MCF 10A (cell line): ENCODE measurements at regions of chr22 and their contacts with region 1.

Region 1: DNA sequence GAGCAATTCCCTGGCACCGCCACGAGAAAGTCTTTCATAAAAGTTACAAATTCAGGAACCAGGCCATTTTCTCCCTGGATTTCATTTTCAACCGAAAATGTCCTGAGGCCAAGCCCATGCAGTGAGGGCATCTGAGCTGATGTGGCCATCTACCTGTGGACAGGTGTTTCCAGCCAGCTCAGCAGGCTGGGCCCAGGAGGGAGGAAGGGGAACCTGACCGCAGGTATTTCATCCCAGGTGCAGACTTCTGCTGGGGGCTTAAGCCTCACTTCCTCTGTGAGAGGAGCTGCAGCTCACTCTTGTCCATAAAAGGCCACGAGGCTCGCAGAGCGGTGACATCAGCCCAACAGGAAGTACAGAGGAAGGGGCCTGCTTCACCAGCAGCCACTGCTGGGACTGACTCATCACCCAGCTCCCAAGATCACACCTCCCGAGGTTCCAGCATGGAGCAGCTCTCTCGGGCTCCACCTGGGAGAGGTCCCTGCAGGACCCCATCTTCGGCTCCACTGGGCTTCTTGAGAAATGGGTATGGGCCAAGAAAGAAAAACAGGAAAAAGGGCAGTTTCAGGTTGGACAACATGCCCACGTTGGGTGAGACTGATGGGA is 56.4 kb downstream of the MYH9 start:
- DNase-seq: peak; percentile 97
- H3K4me3 Mint-ChIP-seq: peak overlapping the region; percentile 64
- H3K27ac Mint-ChIP-seq: peak overlapping the region; percentile 98
- H3K4me1 Mint-ChIP-seq: peaks cover 73% of the 10 kb centered on the region
- H3K27me3 Mint-ChIP-seq: no peaks in the 10 kb centered on the region
- CTCF ChIP-seq: no peak

Region 2: GRCh38 chr22:36352803-36353507 is 21.5 kb after region 1 on chr22:
- CTCF ChIA-PET with region 1: interaction called, 4 read pairs
- POLR2A ChIA-PET with region 1: interaction called, 39 read pairs
- intact Hi-C with region 1: loop called (anchors 2 kb)
- DNase-seq: peak; percentile 83
- H3K4me3 Mint-ChIP-seq: peak overlapping the region; percentile 55
- H3K27ac Mint-ChIP-seq: peak overlapping the region; percentile 83
- H3K4me1 Mint-ChIP-seq: peaks cover 64% of the 10 kb centered on the region
- H3K27me3 Mint-ChIP-seq: no peaks in the 10 kb centered on the region
- CTCF ChIP-seq: no peak

Region 3: GRCh38 chr22:36369922-36370791 is 38.7 kb after region 1 on chr22:
- CTCF ChIA-PET with region 1: interaction called, 5 read pairs
- POLR2A ChIA-PET with region 1: interaction called, 87 read pairs
- intact Hi-C with region 1: loop called (anchors 1 kb)
- DNase-seq: peak; percentile 82
- H3K4me3 Mint-ChIP-seq: peak overlapping the region; percentile 54
- H3K27ac Mint-ChIP-seq: peak overlapping the region; percentile 79
- H3K4me1 Mint-ChIP-seq: peaks cover 64% of the 10 kb centered on the region
- H3K27me3 Mint-ChIP-seq: no peaks in the 10 kb centered on the region
- CTCF ChIP-seq: no peak

Region 4: DNA sequence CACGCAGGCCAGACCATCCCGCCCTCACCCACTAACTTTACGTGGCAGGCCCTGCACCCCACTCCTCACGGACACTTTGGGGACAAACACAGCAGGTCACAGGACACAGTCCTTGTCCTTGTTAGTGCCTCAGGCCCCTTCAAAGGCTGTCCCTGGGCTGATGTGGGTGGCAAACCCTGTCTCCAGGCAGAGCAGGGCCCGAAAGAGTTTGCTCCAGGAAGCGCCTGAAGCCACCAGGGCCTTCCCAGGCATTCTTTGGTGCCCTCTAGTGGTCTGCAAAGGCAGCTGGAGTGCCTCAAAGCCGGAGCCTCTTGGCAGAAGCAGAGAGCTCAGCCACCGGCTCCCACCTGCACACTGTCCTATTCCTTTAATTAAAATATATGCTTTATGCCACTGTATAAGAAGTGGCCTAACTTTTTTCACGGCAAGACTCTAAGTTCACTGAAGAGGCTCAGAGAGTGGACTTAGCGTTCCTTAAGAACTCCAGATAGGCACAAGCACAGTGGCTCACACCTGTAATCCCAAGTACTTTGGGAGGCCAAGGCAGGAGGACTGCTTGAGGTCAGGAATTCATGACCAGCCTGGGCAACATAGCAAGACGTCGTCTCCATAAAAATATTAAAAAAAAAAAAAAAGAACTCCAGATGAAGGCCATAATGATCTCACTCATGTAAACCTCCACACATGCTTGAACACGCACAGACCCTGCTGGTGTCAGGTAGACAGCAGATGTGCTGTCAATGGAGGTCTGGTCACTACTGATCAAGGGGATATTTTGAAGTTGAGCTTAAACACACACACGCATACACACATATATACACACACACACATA is 139.0 kb after region 1 on chr22:
- CTCF ChIA-PET with region 1: interaction called, 19 read pairs
- POLR2A ChIA-PET with region 1: interaction called, 56 read pairs
- intact Hi-C with region 1: no loop called
- DNase-seq: peak; percentile 85
- H3K4me3 Mint-ChIP-seq: no peak overlapping the region
- H3K27ac Mint-ChIP-seq: peak overlapping the region; percentile 51
- H3K4me1 Mint-ChIP-seq: peaks cover 48% of the 10 kb centered on the region
- H3K27me3 Mint-ChIP-seq: no peaks in the 10 kb centered on the region
- CTCF ChIP-seq: peak; percentile 91